SK-N-SH (cell line): ENCODE measurements at regions of chr13 and their contacts with region 1.

Region 1: DNA sequence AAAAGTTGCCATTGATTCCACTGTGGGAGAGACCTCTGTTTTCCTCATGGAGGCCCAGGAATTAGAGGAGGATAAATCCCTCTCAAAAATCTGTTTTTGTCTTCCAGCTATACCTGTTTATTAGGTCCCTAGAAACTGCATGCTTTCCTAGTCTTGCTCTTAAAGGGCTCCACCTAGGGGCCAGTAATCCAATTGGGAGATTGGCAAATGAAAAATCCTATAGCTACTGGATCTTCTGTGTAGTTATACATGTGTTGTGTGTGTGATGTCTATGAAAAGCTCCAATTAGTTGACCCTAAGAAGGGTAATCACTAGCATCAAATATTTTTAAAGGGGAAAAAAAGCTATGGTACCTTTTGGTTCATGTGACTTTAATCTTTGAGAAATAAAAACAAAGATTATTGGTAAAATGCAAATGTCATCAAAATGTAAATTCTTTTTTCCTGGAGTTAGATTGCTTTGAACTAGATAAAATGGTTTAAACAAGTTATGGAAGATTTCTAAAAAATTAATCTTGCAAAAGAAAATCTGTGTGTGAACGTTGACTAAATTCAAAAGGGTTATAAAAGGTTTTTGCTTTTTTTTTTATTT is 63.4 kb upstream of the C1QTNF9B start:
- DNase-seq: no peak
- H3K4me3 ChIP-seq: no peak overlapping the region
- H3K27ac ChIP-seq: no peak overlapping the region
- H3K4me1 ChIP-seq: peaks cover 0 to 3% of the 10 kb centered on the region in 2 experiments; a peak in 2 of 4 replicates
- H3K27me3 ChIP-seq: no peaks in the 10 kb centered on the region
- CTCF ChIP-seq: peak; percentile 90
- EP300 ChIP-seq: no peak
- RAD21 ChIP-seq: peak; percentile 65

Region 2: DNA sequence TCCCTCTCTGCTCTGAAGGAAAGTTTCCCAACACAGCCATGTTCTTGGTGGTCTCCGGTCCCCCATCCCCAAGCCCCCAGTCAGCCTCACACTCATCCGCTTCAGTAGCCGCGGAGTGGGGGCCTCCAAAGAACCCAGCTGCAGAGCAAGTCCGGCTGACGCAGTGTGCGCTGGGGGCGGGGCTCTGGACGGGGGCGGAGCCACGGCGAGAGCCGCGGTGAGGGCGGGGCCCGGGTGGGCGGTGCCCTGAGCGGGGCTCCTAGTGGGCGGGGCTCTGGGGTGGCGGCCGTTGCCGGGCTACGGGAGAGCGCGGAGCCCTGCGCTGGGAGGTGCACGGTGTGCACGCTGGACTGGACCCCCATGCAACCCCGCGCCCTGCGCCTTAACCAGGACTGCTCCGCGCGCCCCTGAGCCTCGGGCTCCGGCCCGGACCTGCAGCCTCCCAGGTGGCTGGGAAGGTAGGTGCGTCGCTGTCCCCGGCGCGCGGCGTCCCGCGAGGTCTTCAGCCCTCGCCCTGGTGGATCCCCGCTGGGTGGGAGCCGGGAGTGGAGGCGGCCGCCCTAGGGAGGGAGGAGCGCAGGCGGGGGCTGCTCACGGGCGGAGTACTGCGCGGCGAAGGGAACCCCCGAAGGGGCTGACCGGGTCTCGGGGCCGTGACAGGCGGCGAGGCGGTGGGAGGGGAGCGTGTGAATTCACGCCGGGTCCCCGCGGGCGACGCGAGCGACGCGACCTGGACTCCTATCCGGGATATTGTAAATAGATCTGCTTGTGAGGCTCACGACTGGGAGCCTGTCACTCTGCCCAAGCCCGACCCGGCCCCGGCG is 381.4 kb before region 1 on chr13:
- CTCF ChIA-PET with region 1: no interaction called
- POLR2A ChIA-PET with region 1: no interaction called
- DNase-seq: peak; percentile 98
- H3K4me3 ChIP-seq: peak overlapping the region; percentile 83 to 87
- H3K27ac ChIP-seq: peak overlapping the region; percentile 68 to 84; a peak in 3 of 4 replicates
- H3K4me1 ChIP-seq: peaks cover 0 to 4% of the 10 kb centered on the region in 2 experiments; a peak in 2 of 4 replicates
- H3K27me3 ChIP-seq: no peaks in the 10 kb centered on the region
- CTCF ChIP-seq: no peak
- EP300 ChIP-seq: no peak
- RAD21 ChIP-seq: no peak

Region 3: DNA sequence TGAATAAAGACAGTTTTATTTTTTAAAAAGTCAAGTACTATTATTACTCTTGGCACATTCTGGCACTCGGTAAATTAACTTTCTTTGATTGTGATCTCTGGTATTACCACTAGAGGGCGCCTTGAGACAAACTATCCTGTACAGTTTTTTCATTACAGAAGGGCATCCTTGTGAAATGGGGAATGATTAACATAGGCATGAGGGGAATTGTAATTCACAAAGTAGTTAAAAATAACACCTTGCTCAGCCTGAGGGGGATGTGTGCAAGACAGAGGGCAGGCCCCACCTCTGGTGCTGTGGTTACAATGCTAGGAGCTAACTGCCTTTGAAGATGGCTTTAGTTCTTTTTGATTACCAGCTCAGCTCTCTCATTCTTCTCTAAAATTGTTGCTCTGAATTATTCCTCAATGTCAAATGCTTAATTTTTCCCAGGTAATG is 39.2 kb before region 1 on chr13:
- CTCF ChIA-PET with region 1: interaction called, 10 read pairs
- POLR2A ChIA-PET with region 1: no interaction called
- DNase-seq: peak; percentile 36
- H3K4me3 ChIP-seq: no peak overlapping the region; a peak in 1 of 4 replicates
- H3K27ac ChIP-seq: no peak overlapping the region
- H3K4me1 ChIP-seq: no peaks in the 10 kb centered on the region
- H3K27me3 ChIP-seq: no peaks in the 10 kb centered on the region
- CTCF ChIP-seq: peak; percentile 86
- EP300 ChIP-seq: no peak
- RAD21 ChIP-seq: peak; percentile 78

Region 4: GRCh38 chr13:23980160-23980551 is 19.5 kb after region 1 on chr13:
- CTCF ChIA-PET with region 1: interaction called, 17 read pairs
- POLR2A ChIA-PET with region 1: no interaction called
- DNase-seq: peak; percentile 89
- H3K4me3 ChIP-seq: peak overlapping the region; percentile 79 to 92
- H3K27ac ChIP-seq: peak overlapping the region; percentile 66 to 98; a peak in 3 of 4 replicates
- H3K4me1 ChIP-seq: peaks cover 0 to 4% of the 10 kb centered on the region in 2 experiments; a peak in 1 of 4 replicates
- H3K27me3 ChIP-seq: no peaks in the 10 kb centered on the region
- CTCF ChIP-seq: no peak
- EP300 ChIP-seq: no peak
- RAD21 ChIP-seq: no peak